CD4-positive, alpha-beta memory T cell (primary cell): ENCODE measurements at regions of chr21 and their contacts with region 1.

Region 1: GRCh38 chr21:42424914-42425541 is 21.3 kb downstream of the UBASH3A start:
- DNase-seq: peak; percentile 87 to 92 (median 89)
- H3K4me3 ChIP-seq: peak overlapping the region; percentile 5 to 39
- H3K4me3 Mint-ChIP-seq: peak overlapping the region; percentile 57 to 91 (median 78)
- H3K27ac ChIP-seq: peak overlapping the region; percentile 71
- H3K27ac Mint-ChIP-seq: peak overlapping the region; percentile 67 to 96 (median 93)
- H3K4me1 ChIP-seq: peaks cover 84% of the 10 kb centered on the region
- H3K4me1 Mint-ChIP-seq: peaks cover 64 to 81% (median 74%) of the 10 kb centered on the region in 4 donors
- H3K27me3 ChIP-seq: no peaks in the 10 kb centered on the region
- H3K27me3 Mint-ChIP-seq: no peaks in the 10 kb centered on the region

Region 2: GRCh38 chr21:42392721-42393442 is 32.1 kb before region 1 on chr21:
- CTCF ChIA-PET with region 1: interaction called, 5 read pairs
- POLR2A ChIA-PET with region 1: interaction called, 604 read pairs
- intact Hi-C with region 1: loop called (anchors 5 kb)
- DNase-seq: peak in 1 of 5 donors; percentile 44
- H3K4me3 ChIP-seq: peak overlapping the region in 1 of 2 donors; percentile 30
- H3K4me3 Mint-ChIP-seq: peak overlapping the region; percentile 19 to 75 (median 44)
- H3K27ac ChIP-seq: no peak overlapping the region
- H3K27ac Mint-ChIP-seq: peak overlapping the region; percentile 0 to 60 (median 31)
- H3K4me1 ChIP-seq: peaks cover 38% of the 10 kb centered on the region
- H3K4me1 Mint-ChIP-seq: peaks cover 26 to 75% (median 44%) of the 10 kb centered on the region in 4 donors
- H3K27me3 ChIP-seq: no peaks in the 10 kb centered on the region
- H3K27me3 Mint-ChIP-seq: no peaks in the 10 kb centered on the region

Region 3: DNA sequence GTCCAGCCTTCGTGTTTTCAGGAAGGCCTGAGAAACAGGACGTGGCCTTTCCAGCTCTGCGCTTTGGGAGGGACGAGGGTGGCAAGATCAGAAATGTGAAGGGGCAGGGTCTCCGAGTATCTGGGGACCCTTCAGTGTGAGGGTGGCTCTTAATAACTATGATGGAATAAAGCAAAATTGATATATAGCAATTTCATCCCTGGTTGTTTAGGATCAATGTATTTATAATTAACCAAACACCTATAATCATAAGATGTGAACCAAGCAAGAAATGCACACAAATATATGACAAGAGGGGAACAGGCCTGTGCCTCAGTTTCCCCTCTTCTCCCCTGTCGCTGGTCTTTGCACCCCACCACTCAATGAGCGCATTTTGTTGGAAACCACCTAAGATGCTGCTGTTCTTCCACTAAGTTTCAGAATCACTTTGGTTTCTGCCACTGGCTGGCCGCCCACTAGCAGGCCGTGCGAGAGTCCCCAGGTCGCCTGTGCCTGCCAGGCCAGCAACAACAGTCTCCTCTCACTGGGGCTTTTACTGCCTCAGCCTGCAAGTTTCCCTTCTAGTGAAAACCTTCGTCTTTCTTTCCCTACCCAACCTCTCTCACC is 15.3 kb after region 1 on chr21:
- CTCF ChIA-PET with region 1: interaction called, 5 read pairs
- POLR2A ChIA-PET with region 1: interaction called, 12 read pairs
- intact Hi-C with region 1: loop called (anchors 2 kb)
- DNase-seq: no peak
- H3K4me3 ChIP-seq: no peak overlapping the region
- H3K4me3 Mint-ChIP-seq: no peak overlapping the region
- H3K27ac ChIP-seq: no peak overlapping the region
- H3K27ac Mint-ChIP-seq: peak overlapping the region; percentile 60 to 93 (median 69)
- H3K4me1 ChIP-seq: peaks cover 26% of the 10 kb centered on the region
- H3K4me1 Mint-ChIP-seq: peaks cover 16 to 42% (median 30%) of the 10 kb centered on the region in 4 donors
- H3K27me3 ChIP-seq: no peaks in the 10 kb centered on the region
- H3K27me3 Mint-ChIP-seq: no peaks in the 10 kb centered on the region

Region 4: GRCh38 chr21:42507418-42507817 is 82.4 kb after region 1 on chr21:
- CTCF ChIA-PET with region 1: no interaction called
- POLR2A ChIA-PET with region 1: no interaction called
- intact Hi-C with region 1: no loop called
- DNase-seq: no peak
- H3K4me3 ChIP-seq: no peak overlapping the region
- H3K4me3 Mint-ChIP-seq: no peak overlapping the region
- H3K27ac ChIP-seq: no peak overlapping the region
- H3K27ac Mint-ChIP-seq: no peak overlapping the region
- H3K4me1 ChIP-seq: no peaks in the 10 kb centered on the region
- H3K4me1 Mint-ChIP-seq: peaks cover 1 to 7% (median 3%) of the 10 kb centered on the region in 4 donors
- H3K27me3 ChIP-seq: no peaks in the 10 kb centered on the region
- H3K27me3 Mint-ChIP-seq: no peaks in the 10 kb centered on the region